Activated T-helper 1 cell treated with anti-CD3 and anti-CD28 coated beads, Interleukin-12 subunit alpha, Interleukin-12 subunit beta, Interleukin-2, Interleukin-4 antibody, amounts not matched to agents 30 ng/mL and 10 ng/mL and 1 ng/mL, durations not matched to agents 14 hours and 24 hours and 36 hours (primary cell): ENCODE measurements at regions of chr19 and their contacts with region 1.

Region 1: GRCh38 chr19:48321622-48322591 is 3.4 kb upstream of the EMP3 start:
- DNase-seq: peak; percentile 100
- H3K4me3 Mint-ChIP-seq: peak overlapping the region; percentile 87
- H3K27ac Mint-ChIP-seq: peak overlapping the region; percentile 98
- H3K4me1 Mint-ChIP-seq: peaks cover 70% of the 10 kb centered on the region
- H3K27me3 Mint-ChIP-seq: peaks cover 2% of the 10 kb centered on the region

Region 2: GRCh38 chr19:48170038-48170812 is 151.7 kb before region 1 on chr19 and contains the starts of genes LIG1 and ZSWIM9:
- intact Hi-C with region 1: no loop called
- DNase-seq: peak; percentile 89
- H3K4me3 Mint-ChIP-seq: peak within 1 kb of the TSS; percentile 97
- H3K27ac Mint-ChIP-seq: peak within 1 kb of the TSS; percentile 100
- H3K4me1 Mint-ChIP-seq: peaks cover 33% of the 10 kb centered on the region
- H3K27me3 Mint-ChIP-seq: peaks cover 3% of the 10 kb centered on the region
- total RNA-seq, gene LIG1: 133 and 140 TPM in 2 replicates
- total RNA-seq, gene ZSWIM9: 8.4 and 9.5 TPM in 2 replicates

Region 3: GRCh38 chr19:48216933-48217332 is 105.0 kb before region 1 on chr19:
- intact Hi-C with region 1: no loop called
- DNase-seq: no peak
- H3K4me3 Mint-ChIP-seq: no peak overlapping the region
- H3K27ac Mint-ChIP-seq: no peak overlapping the region
- H3K4me1 Mint-ChIP-seq: no peaks in the 10 kb centered on the region
- H3K27me3 Mint-ChIP-seq: no peaks in the 10 kb centered on the region

Region 4: DNA sequence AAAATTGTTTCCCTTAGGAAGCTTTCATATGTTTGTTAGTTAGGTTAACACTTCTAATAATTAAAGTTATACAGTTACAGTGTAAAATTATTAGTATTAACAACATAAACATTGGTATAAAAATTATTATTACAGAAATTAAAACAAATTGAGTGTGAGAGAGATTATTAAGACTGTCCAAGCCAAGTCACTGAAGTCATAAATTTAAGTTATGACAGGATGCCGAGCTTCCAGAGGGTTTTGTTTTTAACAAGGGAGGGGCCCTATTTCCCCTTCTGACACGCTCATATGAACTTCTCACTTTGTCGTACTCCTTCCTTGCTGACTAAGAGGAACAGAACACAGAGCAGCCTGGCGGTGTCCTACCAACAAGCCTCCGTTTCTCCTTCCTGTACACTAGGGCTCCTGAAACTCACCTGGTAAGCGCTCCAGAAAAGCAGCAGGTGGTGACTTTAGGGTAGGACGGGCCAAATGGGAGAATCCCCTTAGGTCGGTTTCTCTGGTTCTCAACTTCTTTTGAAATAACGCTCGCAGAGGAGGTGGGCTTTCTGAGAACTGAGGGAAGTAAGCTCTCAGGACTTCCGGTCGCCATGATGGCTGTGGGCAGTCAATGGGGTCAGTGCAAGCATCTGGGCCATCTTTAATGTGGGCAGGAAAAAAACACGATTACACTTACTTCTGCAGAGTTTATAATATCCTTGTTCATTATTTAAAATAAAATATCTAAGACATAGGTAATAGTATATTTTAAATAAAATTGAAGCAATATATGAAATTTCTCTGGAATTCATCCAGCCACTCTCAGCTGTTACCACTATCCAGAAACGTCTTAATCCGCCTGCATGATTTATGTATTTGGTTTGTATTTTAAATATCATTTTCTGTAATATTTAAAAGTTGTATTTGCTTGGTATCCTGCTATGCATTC is 66.3 kb before region 1 on chr19 and contains the start of gene CARD8:
- intact Hi-C with region 1: loop called (anchors 5 kb)
- DNase-seq: peak; percentile 80
- H3K4me3 Mint-ChIP-seq: peak within 1 kb of the TSS; percentile 96
- H3K27ac Mint-ChIP-seq: peak within 1 kb of the TSS; percentile 98
- H3K4me1 Mint-ChIP-seq: peaks cover 79% of the 10 kb centered on the region
- H3K27me3 Mint-ChIP-seq: no peaks in the 10 kb centered on the region
- total RNA-seq, gene CARD8: 117 and 130 TPM in 2 replicates

Region 5: DNA sequence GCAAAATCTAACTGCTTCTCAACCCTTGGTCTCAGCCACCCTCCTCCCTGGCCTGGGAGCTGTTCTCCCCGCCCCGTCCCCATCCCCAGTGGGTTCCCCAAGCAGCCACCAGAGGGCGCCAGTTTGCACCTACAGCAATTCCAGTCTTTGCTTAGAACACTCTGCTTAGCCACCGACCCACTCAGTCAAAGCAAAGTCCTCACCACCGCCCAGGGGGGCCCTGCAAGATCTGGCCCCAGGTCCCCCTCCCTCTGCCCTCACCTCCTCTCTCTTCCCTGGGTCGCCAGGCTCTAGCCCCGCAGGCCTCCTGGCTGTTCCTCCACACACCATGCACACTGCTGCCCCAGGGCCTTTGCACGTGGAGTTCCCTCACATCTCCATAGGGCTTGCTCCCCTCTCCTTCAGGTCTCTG is 29.4 kb after region 1 on chr19:
- intact Hi-C with region 1: loop called (anchors 2 kb)
- DNase-seq: peak; percentile 69
- H3K4me3 Mint-ChIP-seq: no peak overlapping the region
- H3K27ac Mint-ChIP-seq: no peak overlapping the region
- H3K4me1 Mint-ChIP-seq: peaks cover 5% of the 10 kb centered on the region
- H3K27me3 Mint-ChIP-seq: no peaks in the 10 kb centered on the region

Region 6: DNA sequence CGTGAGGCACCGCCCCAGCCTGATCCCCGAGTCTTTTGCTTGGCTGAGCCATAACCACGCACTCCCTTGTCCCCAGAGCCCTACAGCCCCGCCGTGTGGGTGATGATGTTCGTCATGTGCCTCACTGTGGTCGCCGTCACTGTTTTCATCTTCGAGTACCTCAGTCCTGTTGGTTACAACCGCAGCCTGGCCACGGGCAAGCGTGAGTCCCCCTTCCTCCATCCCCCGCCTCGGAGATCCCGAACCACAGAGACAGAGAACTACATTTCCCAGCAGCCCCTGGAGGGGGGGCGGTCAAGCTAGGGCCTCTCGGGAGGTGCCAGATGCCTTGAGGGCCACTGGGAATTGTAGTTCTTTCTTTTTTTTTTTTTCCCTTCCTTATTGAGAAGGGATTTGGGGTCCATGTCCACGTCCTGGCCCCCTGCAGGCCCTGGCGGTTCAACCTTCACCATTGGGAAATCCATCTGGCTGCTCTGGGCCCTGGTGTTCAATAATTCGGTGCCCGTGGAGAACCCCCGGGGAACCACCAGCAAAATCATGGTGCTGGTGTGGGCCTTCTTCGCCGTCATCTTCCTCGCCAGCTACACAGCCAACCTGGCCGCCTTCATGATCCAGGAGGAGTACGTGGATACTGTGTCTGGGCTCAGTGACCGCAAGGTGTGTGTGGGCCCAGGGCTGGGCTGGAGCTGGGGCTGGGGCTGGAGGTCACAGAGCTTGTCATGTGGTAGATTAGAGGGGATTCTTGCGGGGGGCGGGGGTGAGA is 97.4 kb after region 1 on chr19:
- intact Hi-C with region 1: loop called (anchors 1 kb)
- DNase-seq: peak; percentile 66
- H3K4me3 Mint-ChIP-seq: peak overlapping the region; percentile 75
- H3K27ac Mint-ChIP-seq: peak overlapping the region; percentile 65
- H3K4me1 Mint-ChIP-seq: peaks cover 26% of the 10 kb centered on the region
- H3K27me3 Mint-ChIP-seq: peaks cover 18% of the 10 kb centered on the region

Region 7: DNA sequence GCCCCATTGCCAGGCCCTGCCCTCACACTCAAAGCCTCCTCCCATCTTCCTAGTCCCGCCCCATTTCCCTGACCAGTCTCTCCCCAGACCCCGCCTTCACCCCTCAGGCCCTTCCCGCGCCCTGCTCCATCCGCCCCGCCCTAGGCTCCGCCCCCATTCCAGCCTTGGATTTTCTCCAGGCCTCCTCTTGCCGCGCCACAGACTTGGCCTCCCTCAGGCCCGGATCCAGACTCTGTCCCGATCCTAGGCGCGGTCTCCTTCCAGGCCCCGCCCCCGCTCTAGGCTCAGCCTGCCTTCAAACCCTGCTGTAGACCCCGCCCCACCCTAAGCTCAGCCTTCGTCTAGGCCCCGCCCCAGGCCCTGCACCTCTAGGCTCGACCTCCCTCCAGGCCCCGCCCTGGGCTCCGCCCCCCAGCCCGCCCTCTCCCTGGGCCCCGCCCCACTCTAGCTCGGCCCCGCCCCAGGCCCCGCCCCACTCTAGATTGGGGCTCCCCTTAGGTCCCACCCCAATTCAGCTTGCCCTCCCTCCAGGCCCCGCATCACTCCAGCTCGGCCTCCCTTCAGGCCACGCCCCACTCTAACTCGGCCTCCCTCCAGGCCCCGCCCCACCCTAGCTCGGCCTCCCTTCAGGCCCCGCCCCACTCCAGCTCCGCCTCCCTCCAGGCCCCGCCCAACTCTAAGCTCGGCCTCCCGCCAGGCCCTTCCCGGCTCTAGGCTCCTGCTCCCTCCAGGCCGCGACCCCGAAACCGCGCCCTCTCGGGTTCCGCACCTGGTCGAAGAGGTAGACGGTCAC is 171.2 kb after region 1 on chr19:
- intact Hi-C with region 1: loop called (anchors 2 kb)
- DNase-seq: peak; percentile 82
- H3K4me3 Mint-ChIP-seq: peak overlapping the region; percentile 68
- H3K27ac Mint-ChIP-seq: peak overlapping the region; percentile 29
- H3K4me1 Mint-ChIP-seq: peaks cover 27% of the 10 kb centered on the region
- H3K27me3 Mint-ChIP-seq: peaks cover 21% of the 10 kb centered on the region

Region 8: DNA sequence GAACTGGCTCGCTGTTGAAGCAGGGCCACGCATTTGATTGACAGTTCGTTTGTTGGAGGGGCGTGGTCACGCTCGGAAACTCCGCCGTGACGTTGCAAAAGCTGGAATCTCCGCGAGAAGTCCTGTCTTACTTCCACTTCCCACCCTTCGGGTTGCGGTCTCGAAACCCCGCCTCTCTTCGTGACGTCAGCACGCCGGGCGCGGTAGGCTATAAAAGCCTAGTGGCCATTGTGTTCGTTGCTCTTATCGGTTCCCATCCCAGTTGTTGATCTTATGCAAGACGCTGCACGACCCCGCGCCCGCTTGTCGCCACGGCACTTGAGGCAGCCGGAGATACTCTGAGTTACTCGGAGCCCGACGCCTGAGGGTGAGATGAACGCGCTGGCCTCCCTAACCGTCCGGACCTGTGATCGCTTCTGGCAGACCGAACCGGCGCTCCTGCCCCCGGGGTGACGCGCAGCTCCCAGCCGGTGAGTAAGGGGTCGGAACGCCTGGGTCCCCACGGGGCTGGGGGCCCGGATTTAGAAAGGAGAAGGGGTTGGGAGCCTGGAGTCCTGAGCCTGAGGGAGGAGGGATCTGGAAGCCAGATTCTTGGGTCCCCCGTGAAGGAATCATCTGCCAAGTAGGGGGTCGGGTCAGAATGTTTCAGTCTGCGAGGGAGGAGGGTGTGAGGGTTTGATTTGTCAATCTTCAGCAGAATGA is 550.4 kb after region 1 on chr19 and contains the start of gene PPP1R15A:
- intact Hi-C with region 1: loop called (anchors 10 kb)
- DNase-seq: peak; percentile 99
- H3K4me3 Mint-ChIP-seq: peak within 1 kb of the TSS; percentile 97
- H3K27ac Mint-ChIP-seq: peak within 1 kb of the TSS; percentile 99
- H3K4me1 Mint-ChIP-seq: peaks cover 42% of the 10 kb centered on the region
- H3K27me3 Mint-ChIP-seq: peaks cover 4% of the 10 kb centered on the region
- total RNA-seq, gene PPP1R15A: 53.1 and 53.7 TPM in 2 replicates